PC-3 (cell line): ENCODE measurements at regions of chr15 and their contacts with region 1.

Region 1: DNA sequence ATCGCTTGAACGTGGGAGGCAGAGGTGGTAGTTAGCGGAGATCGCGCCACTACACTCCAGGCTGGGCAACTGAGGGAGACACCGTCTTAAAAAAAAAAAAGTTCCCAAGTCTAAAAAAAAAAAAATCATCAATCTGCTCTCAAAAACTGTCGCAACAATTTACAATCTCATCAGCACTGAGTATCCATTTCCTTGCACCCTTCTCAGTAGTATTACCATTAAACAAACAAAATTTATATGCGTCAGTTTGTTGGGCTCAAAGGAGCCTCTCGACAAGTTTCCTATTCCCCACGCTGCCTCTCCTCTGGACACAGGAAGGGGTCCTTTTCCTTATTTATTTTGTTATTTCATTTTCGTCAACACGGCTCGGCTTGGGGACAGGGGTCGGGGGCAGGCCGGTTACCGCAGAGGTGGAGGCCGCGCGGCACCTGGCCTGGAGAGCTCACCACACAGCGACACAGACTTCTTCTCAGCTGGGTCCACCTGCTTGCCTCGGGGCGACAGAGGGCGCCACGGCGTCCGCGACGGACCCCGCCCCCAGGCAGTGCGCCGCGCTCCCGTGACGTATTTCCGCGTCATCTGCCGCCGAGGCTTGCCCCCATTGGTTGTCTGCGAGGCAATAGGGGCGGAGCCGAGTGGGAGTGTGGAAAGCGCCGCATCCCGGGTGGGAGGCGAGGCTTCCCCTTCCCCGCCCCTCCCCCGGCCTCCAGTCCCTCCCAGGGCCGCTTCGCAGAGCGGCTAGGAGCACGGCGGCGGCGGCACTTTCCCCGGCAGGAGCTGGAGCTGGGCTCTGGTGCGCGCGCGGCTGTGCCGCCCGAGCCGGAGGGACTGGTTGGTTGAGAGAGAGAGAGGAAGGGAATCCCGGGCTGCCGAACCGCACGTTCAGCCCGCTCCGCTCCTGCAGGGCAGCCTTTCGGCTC is at the start of gene MAP2K1:
- DNase-seq: peak; percentile 95
- ATAC-seq: peak; percentile 80
- H3K4me3 ChIP-seq: peak within 1 kb of the TSS; percentile 90
- H3K27ac ChIP-seq: peak within 1 kb of the TSS; percentile 56
- H3K4me1 ChIP-seq: peaks cover 26% of the 10 kb centered on the region
- H3K27me3 ChIP-seq: no peaks in the 10 kb centered on the region
- CTCF ChIP-seq: peak; percentile 68
- total RNA-seq, gene MAP2K1: 35.5 and 55.2 TPM in 2 replicates

Region 2: GRCh38 chr15:66356345-66357236 is 29.9 kb before region 1 on chr15 and contains the start of gene TIPIN:
- CTCF ChIA-PET with region 1: no interaction called
- POLR2A ChIA-PET with region 1: no interaction called
- intact Hi-C with region 1: loop called (anchors 1 kb)
- DNase-seq: peak; percentile 94
- ATAC-seq: peak; percentile 96
- H3K4me3 ChIP-seq: peak within 1 kb of the TSS; percentile 89
- H3K27ac ChIP-seq: peak within 1 kb of the TSS; percentile 57
- H3K4me1 ChIP-seq: peaks cover 16% of the 10 kb centered on the region
- H3K27me3 ChIP-seq: no peaks in the 10 kb centered on the region
- CTCF ChIP-seq: no peak
- total RNA-seq, gene TIPIN: 11.5 and 14.2 TPM in 2 replicates

Region 3: DNA sequence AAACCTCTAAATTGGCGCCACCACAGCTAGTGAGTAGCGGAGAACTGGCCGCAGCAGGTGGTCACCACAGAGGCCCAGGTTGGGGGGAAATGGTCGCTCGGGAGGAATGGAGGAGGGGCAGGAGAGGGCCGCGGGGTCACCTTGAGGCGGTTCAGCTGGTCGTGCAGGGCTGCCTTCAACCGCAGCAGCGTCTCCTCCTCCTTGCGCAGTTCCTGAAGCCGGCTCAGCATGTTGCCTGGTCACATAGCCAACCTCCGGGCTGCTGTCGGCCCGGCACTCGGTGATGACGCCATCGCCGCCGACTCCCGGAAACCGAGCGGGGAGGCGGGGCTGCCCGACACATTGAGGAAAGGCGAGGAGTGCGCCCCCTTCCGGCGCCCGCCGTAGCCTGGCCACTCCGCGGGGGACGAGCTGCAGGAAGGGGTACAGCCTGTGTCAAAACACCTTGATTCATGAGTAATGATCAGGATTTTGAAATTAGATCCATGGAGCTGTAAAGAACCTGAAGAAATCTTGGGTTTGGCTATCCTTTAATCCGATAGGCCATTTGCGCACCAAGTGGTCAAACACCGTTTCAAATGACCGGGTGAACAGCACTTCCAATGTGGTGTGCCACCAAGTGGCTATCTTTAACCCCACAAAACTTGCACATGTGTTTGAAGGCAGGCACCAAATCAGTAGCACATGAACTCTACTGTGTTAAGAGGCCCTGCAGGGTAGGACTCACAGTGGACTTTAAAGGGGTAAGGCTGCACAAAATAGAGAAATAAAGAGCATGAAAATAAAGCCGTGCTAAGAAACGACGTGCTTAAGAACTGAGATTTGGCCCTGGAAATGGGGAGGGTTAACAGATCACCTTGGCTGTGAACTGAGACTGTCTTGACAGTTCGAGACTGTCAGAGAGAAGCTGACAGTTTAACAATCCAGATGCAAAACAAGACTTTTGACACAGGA is 111.3 kb after region 1 on chr15 and contains the start of gene SNAPC5:
- CTCF ChIA-PET with region 1: interaction called, 3 read pairs
- POLR2A ChIA-PET with region 1: no interaction called
- intact Hi-C with region 1: loop called (anchors 1 kb)
- DNase-seq: peak; percentile 93
- ATAC-seq: peak; percentile 84
- H3K4me3 ChIP-seq: peak within 1 kb of the TSS; percentile 90
- H3K27ac ChIP-seq: peak within 1 kb of the TSS; percentile 79
- H3K4me1 ChIP-seq: peaks cover 15% of the 10 kb centered on the region
- H3K27me3 ChIP-seq: no peaks in the 10 kb centered on the region
- CTCF ChIP-seq: peak; percentile 92
- total RNA-seq, gene SNAPC5: 34.1 and 38.2 TPM in 2 replicates